Left cardiac atrium (tissue), 4 donors: ENCODE measurements at regions of chr1 and their contacts with region 1.

Region 1: DNA sequence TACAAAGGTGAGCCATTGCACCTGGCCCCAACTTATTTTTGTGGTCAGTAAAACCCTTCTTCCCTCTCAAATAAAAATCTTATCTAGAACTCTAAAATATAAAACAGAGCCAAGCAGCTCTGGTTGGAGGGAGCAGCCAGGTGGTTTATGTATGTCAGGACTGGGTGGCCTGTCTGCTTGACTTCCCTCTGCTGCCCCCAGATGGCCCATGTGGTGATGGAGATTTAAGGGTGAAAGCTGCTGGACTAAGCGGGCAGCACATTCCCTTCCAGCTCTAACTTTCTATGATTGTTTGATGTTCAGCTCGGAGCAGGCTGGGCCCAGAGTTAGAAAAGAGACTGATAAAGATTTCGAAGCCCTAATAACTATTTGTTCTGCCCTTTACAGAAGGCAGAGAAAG is 11.9 kb upstream of the PAQR6 start:
- DNase-seq: no peak
- ATAC-seq: no peak

Region 2: DNA sequence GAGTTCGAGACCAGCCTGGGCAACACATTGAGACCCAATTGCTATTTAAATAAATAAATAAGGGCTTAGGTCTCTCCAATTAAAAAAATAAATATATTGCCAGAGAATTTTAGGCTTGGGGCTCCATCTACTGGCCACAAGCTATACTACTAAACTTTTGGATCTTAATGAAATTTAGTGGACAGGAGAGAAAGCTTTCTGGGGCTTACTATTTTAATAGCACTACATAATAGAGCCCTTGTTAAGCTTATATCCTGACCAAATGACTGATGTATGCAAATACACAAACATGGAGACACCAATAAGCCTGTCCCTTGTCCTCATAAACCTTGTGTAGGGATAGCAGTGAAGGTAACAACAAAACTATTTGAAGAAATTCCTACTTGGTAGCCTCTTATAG is 59.9 kb after region 1 on chr1:
- intact Hi-C with region 1: loop called (anchors 10 kb)
- DNase-seq: no peak
- ATAC-seq: no peak